Left cardiac atrium (tissue), 4 donors: ENCODE measurements at regions of chr12 and their contacts with region 1.

Region 1: DNA sequence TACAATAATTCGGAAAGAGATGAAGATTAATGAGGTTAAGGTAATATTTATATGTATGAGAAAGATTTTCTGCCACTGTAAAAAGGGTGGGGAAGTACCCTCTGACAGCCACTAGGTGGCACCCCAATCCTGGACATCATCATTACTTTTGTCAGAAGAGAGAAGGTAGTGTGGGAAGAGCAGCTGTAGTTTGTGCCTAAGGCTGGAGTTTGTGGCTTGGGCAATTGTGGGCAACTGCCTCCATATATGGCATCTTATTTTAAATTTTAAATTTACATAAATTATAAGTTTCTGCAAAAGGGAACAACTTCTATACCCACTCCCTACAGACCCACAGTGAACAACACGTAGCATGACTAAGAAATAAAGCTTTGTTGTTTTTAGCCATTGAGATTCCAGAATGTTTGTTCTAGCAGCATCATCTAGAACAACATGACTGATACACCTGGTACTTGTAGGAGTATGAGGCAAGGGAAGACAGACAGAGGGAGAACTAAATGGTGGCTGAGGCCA is 34.4 kb upstream of the SYCP3 start:
- DNase-seq: peak; percentile 49
- ATAC-seq: peak; percentile 79 to 81

Region 2: GRCh38 chr12:101819467-101819866 is 45.8 kb after region 1 on chr12:
- intact Hi-C with region 1: no loop called
- DNase-seq: no peak
- ATAC-seq: no peak

Region 3: GRCh38 chr12:101830367-101831325 is 56.9 kb after region 1 on chr12 and contains the start of gene GNPTAB:
- intact Hi-C with region 1: loop called (anchors 2 to 5 kb)
- DNase-seq: peak; percentile 95
- ATAC-seq: peak; percentile 97
- total RNA-seq, gene GNPTAB: 41.1 to 45.1 TPM

Region 4: GRCh38 chr12:101839324-101840283 is 65.9 kb after region 1 on chr12:
- intact Hi-C with region 1: loop called (anchors 2 to 5 kb)
- DNase-seq: peak; percentile 55
- ATAC-seq: peak; percentile 59 to 73